OCI-LY7 (cell line): ENCODE measurements at regions of chr14 and their contacts with region 1.

Region 1: DNA sequence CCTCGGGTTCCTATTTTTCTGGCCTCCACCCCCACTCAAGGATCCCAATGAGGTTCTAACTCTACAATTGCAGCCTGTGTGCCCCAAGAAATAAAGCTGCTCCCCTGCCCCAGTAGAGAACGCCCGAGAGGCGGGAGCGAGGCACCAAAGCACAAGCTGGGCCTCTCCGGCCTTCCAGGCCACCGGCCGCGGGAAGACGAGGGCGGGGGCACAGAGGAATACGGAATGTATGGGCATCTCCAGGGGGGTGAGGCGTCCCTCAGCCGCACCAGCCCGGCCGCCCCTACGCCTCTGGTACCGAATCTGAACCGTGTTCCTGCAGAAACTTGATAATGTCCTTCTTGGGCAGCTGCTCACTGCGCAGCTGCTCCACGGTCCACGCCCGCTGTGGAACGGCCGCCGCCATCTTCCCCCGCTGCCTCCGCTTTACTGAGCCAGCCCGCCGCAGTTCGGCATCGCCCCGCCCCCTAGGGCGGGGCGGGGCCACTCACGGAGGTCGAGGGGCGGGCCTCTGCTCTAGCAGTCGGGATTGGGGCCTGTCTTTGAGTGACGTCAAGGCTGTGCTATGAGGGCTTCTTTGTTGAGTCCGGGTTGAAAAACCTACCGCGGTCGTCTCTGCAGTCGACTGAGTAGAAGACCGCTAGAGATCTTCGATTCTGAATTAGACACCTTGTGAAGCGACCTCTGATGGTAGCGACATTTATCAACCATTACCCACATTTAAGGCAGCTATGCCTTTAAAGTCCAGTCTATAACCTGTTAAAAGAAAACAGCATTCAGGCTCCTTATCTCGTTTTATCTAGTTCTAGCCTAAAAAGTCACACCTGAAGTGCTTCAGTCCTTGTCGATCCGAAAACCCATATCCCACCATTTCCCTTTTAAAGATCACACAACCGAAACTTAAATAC is at the start of gene FKBP3:
- DNase-seq: peak; percentile 100
- H3K4me3 ChIP-seq: peak within 1 kb of the TSS; percentile 84
- H3K27ac ChIP-seq: peak within 1 kb of the TSS; percentile 84
- H3K4me1 ChIP-seq: peaks cover 22% of the 10 kb centered on the region
- CTCF ChIP-seq: peak; percentile 71
- total RNA-seq, gene FKBP3: 22.4 and 24.2 TPM in 2 replicates

Region 2: DNA sequence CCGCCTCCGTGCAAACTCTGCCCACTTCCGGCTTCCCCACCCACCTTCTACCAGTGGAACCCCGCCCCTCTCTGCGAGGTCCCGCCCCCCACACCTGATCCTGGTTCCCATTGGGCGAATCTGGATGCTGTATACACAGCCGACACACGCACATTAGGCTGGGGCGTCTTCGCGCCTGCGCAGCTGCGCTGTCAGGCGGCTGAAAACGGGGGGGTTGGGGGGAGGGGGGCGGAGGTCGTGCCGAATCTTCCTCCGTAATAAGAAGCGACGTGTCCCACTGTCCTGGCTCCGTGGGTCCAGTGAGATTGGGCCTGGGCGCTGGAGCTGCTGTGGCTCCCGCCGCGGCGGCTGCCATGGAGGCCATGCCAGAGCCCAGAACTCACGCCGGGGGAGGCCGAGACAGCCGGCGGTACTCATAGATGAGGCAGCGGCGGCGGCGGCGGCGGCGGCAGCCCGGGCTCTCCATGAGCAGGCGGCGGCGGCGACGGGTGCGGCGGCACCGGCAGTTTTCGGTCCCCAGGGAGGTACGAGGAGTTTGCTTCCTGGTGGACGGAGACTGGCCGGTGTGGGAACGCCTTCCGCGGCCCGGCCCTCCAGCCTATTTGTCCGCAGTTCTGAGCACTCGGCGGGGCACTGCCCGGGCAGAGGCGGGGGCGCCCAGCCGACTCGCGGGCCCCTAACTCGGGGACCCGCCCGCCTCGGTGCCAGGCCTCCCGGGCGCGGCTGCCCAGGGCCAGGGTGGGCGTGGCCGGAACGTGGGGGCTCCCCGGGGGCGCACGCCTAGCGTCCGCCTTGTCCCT is 237.1 kb before region 1 on chr14:
- CTCF ChIA-PET with region 1: no interaction called
- POLR2A ChIA-PET with region 1: interaction called, 10 read pairs
- intact Hi-C with region 1: loop called (anchors 2 kb)
- DNase-seq: peak; percentile 98
- H3K4me3 ChIP-seq: peak overlapping the region; percentile 87
- H3K27ac ChIP-seq: peak overlapping the region; percentile 58
- H3K4me1 ChIP-seq: peaks cover 17% of the 10 kb centered on the region
- CTCF ChIP-seq: no peak

Region 3: DNA sequence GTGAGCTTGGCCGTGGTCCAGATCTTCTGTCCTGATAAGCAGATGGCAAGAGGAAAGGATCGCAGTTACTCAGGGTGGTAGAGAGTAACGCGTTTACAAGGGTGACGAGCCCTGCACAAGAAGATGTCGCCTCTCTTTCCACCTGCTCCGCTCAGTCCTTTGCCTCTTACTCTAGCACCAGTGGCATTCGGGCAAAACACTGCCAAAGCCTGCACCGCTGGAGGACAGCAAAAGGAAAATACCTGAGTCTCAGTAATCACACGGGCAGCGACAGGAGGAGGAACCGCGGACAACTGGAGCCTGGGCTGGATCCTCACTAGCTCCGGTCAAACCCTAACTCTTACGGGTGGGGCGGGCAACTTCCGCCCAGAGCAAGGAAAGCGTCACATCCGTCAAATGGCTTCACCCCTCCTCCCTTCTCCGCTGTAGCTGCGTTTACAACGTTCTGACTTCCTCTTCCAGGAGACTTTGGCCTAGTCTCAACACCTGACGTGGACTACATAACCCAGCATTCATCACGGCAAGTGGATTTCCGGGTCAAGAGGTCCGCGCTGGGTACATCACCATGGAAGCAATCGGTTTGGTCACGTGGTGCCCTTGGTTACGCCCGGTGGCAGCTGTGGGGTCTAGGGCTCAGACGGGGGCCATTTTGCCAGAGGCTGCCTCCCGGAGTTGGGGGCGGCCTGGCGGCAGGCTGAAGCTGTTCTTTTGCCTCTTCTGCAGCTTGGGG is 172.5 kb before region 1 on chr14 and contains the starts of genes KLHL28 and TOGARAM1:
- CTCF ChIA-PET with region 1: no interaction called
- POLR2A ChIA-PET with region 1: interaction called, 10 read pairs
- intact Hi-C with region 1: loop called (anchors 1 kb)
- DNase-seq: peak; percentile 99
- H3K4me3 ChIP-seq: peak within 1 kb of the TSS; percentile 86
- H3K27ac ChIP-seq: peak within 1 kb of the TSS; percentile 75
- H3K4me1 ChIP-seq: peaks cover 22% of the 10 kb centered on the region
- CTCF ChIP-seq: no peak
- total RNA-seq, gene KLHL28: 3.7 and 10.6 TPM in 2 replicates
- total RNA-seq, gene TOGARAM1: 11.4 and 12.4 TPM in 2 replicates

Region 4: DNA sequence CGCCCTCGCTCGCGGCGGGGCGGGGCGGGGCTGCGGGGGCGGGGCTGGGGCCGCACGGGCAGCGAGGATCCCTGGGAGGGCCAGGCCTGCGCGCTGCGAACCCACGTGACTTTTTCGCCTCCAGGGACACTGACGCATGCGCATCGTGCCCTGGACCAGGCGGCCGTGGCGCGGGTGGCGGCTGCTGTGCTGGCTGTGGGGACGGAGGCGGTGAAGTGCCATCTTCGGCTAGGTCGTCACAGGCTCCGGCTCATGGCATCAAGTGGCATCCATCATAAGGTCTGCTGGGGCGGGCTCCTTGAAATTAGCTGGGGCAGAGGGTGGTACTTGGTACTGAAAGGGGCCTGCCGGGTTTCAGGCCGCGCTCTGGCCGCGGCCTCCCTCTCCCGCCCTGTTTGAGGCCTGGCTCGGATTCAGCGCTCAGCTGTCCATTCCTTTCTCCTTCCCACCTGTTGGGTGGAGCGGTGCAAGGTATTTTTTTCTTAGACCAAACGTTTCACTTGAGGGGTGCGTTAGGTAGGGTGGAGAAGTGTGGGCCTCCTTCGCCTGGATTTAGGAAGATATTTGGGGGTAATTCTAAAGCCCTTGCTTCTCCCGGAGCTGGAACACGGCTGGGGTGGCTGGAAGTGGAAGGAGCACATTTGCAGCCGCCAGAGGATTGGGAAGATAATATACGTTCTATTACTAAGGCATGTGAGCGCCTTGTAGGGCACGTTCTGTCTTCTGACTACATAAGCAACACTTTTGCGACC is 50.2 kb before region 1 on chr14 and contains the start of gene PRPF39:
- CTCF ChIA-PET with region 1: no interaction called
- POLR2A ChIA-PET with region 1: interaction called, 7 read pairs
- intact Hi-C with region 1: loop called (anchors 2 kb)
- DNase-seq: peak; percentile 96
- H3K4me3 ChIP-seq: peak within 1 kb of the TSS; percentile 87
- H3K27ac ChIP-seq: peak within 1 kb of the TSS; percentile 58
- H3K4me1 ChIP-seq: peaks cover 37% of the 10 kb centered on the region
- CTCF ChIP-seq: no peak
- total RNA-seq, gene PRPF39: 39.5 and 43.5 TPM in 2 replicates

Region 5: GRCh38 chr14:45253068-45253753 is 118.9 kb after region 1 on chr14 and contains the start of gene MIS18BP1:
- CTCF ChIA-PET with region 1: no interaction called
- POLR2A ChIA-PET with region 1: interaction called, 12 read pairs
- intact Hi-C with region 1: loop called (anchors 1 kb)
- DNase-seq: peak; percentile 98
- H3K4me3 ChIP-seq: peak within 1 kb of the TSS; percentile 78
- H3K27ac ChIP-seq: peak within 1 kb of the TSS; percentile 88
- H3K4me1 ChIP-seq: peaks cover 26% of the 10 kb centered on the region
- CTCF ChIP-seq: peak; percentile 84
- total RNA-seq, gene MIS18BP1: 99.2 and 116 TPM in 2 replicates

Region 6: DNA sequence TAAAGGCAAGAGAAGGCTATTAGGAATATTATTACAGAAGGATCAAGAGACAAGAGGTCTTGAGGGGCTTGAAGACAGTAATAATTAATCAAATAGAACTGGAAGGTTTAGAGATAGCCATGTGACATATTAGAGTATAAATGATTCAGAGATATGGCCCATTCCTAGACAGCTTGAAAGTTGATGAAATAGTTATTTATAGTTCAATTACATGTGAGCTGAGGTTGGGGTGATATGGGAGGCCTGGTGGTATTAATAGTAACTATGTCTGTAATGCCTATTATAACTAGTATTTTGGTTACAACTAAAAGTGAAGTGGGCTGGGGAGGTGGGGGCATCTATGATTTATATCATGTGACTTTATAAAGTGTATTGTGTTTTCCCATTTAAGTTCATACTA is 132.8 kb after region 1 on chr14:
- CTCF ChIA-PET with region 1: no interaction called
- POLR2A ChIA-PET with region 1: interaction called, 3 read pairs
- intact Hi-C with region 1: loop called (anchors 5 kb)
- DNase-seq: no peak
- H3K4me3 ChIP-seq: no peak overlapping the region
- H3K27ac ChIP-seq: no peak overlapping the region
- H3K4me1 ChIP-seq: no peaks in the 10 kb centered on the region
- CTCF ChIP-seq: no peak

Region 7: DNA sequence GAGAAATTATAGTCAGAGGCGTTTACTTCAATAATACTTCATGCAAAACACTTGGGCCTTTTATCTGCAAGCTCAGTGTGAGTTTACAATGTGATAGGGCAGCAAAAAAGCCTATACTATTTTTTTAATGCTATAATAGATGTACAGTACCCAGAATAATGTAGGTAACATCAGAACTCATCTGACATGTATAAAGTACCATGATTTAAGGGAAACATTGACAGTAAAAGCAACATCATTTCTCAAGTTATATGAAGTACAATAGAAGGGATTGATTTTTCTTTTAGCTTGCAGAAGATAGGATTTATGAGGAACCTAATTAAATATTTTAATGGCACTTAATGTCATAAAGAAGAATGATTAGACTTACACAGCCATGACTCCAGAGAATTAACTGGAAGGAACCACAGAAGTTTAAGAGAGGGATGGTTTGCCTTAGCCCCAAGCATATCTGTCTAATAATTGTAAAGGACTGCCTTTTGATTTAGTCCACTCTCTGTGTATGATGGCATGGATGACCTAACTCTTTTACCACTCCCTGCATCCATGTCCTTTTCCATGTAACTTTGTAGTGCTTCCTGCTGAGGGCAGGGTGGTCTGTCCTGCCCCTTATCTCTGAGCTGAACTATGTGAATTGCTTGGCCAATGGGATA is 174.6 kb after region 1 on chr14:
- CTCF ChIA-PET with region 1: no interaction called
- POLR2A ChIA-PET with region 1: no interaction called
- intact Hi-C with region 1: no loop called
- DNase-seq: no peak
- H3K4me3 ChIP-seq: no peak overlapping the region
- H3K27ac ChIP-seq: no peak overlapping the region
- H3K4me1 ChIP-seq: no peaks in the 10 kb centered on the region
- CTCF ChIP-seq: no peak